Activated CD4-positive, alpha-beta memory T cell treated with anti-CD3 and anti-CD28 coated beads for 36 hours (primary cell): ENCODE measurements at regions of chr2 and their contacts with region 1.

Region 1: GRCh38 chr2:234463626-234464290 is 33.1 kb downstream of the ARL4C start:
- DNase-seq: peak; percentile 85
- H3K4me3 Mint-ChIP-seq: peak overlapping the region; percentile 71
- H3K27ac Mint-ChIP-seq: peak overlapping the region; percentile 91
- H3K4me1 Mint-ChIP-seq: peaks cover 68% of the 10 kb centered on the region
- H3K27me3 Mint-ChIP-seq: no peaks in the 10 kb centered on the region

Region 2: GRCh38 chr2:234425619-234426603 is 37.8 kb before region 1 on chr2:
- CTCF ChIA-PET with region 1: interaction called, 3 read pairs
- POLR2A ChIA-PET with region 1: interaction called, 3 read pairs
- intact Hi-C with region 1: loop called (anchors 1 kb)
- DNase-seq: peak; percentile 78
- H3K4me3 Mint-ChIP-seq: peak overlapping the region; percentile 73
- H3K27ac Mint-ChIP-seq: peak overlapping the region; percentile 81
- H3K4me1 Mint-ChIP-seq: peaks cover 79% of the 10 kb centered on the region
- H3K27me3 Mint-ChIP-seq: no peaks in the 10 kb centered on the region

Region 3: DNA sequence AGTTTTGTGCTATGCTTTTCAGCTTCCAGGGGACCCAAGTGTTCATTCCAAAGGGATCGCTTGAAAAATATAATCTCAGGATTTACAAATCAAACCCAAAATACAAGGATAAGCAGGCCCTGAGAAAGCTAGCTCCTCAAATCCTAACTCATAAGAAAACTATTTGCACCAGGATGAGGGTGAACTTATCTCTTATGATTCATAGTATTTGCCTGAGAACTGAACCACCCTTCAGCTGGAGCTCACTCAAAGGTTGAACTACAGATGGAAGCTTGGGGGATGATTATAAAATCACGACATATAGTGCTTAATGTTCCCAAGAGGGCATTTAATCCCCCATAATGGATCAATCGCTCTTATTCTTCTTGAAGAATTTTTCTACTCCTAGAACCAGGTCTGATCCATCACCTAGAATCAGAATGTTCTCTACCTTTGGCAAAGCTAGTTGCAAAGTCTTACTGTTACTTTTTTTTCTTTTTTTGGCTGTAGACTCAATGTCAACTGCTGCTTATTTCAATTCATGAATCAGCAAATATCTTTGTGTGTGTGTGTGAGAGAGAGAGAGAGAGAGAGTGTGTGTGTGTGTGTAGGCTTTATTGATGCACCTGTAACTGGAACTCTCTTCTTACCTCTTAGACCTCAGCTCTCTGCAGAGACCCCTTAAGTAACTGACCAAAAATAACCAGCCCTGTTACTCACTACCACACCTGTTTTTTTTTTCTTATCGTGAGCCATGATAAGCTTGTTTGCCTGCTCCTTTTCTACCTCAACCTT is 11.7 kb before region 1 on chr2:
- CTCF ChIA-PET with region 1: interaction called, 8 read pairs
- POLR2A ChIA-PET with region 1: interaction called, 12 read pairs
- intact Hi-C with region 1: loop called (anchors 1 kb)
- DNase-seq: no peak
- H3K4me3 Mint-ChIP-seq: peak overlapping the region; percentile 72
- H3K27ac Mint-ChIP-seq: peak overlapping the region; percentile 88
- H3K4me1 Mint-ChIP-seq: peaks cover 78% of the 10 kb centered on the region
- H3K27me3 Mint-ChIP-seq: no peaks in the 10 kb centered on the region

Region 4: GRCh38 chr2:234483568-234484251 is 20.0 kb after region 1 on chr2:
- CTCF ChIA-PET with region 1: interaction called, 12 read pairs
- POLR2A ChIA-PET with region 1: interaction called, 7 read pairs
- intact Hi-C with region 1: loop called (anchors 2 kb)
- DNase-seq: peak; percentile 90
- H3K4me3 Mint-ChIP-seq: peak overlapping the region; percentile 49
- H3K27ac Mint-ChIP-seq: peak overlapping the region; percentile 88
- H3K4me1 Mint-ChIP-seq: peaks cover 90% of the 10 kb centered on the region
- H3K27me3 Mint-ChIP-seq: no peaks in the 10 kb centered on the region